Endothelial cell of umbilical vein (primary cell): ENCODE measurements at regions of chr9 and their contacts with region 1.

Region 1: DNA sequence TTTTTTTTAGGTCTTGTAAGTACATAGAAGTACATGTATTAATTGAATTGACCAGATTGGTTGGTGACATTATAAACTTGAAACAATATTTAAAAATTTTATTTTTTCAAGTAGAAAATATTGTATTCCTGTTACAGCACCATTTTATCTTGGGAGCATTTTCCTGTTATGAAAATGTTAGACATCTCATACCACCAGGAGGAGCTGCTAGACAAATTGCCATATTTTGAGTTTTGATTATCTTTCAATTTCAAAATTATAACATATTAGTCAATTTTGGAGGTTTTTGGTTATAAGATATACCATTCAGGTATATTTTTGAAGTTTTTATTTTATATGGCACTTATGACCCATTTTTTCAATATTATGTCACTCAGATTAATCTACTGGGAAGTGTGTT is 84.4 kb downstream of the CNTLN start:
- DNase-seq: peak; percentile 16
- H3K4me3 ChIP-seq: no peak overlapping the region
- H3K27ac ChIP-seq: no peak overlapping the region
- H3K4me1 ChIP-seq: no peaks in the 10 kb centered on the region
- H3K27me3 ChIP-seq: no peaks in the 10 kb centered on the region
- CTCF ChIP-seq: peak in 1 of 2 donors; percentile 18
- POLR2A ChIP-seq: no peak

Region 2: GRCh38 chr9:17402309-17402708 is 183.0 kb after region 1 on chr9:
- CTCF ChIA-PET with region 1: interaction called, 14 read pairs
- POLR2A ChIA-PET with region 1: no interaction called
- dilution Hi-C with region 1: no loop called
- intact Hi-C with region 1: loop called (anchors 2 kb)
- DNase-seq: peak; percentile 29
- H3K4me3 ChIP-seq: no peak overlapping the region
- H3K27ac ChIP-seq: no peak overlapping the region
- H3K4me1 ChIP-seq: peaks cover 8% of the 10 kb centered on the region
- H3K27me3 ChIP-seq: no peaks in the 10 kb centered on the region
- CTCF ChIP-seq: no peak
- POLR2A ChIP-seq: no peak

Region 3: GRCh38 chr9:17462869-17463464 is 243.7 kb after region 1 on chr9:
- CTCF ChIA-PET with region 1: interaction called, 74 read pairs
- POLR2A ChIA-PET with region 1: no interaction called
- dilution Hi-C with region 1: no loop called
- intact Hi-C with region 1: loop called (anchors 1 kb)
- DNase-seq: peak; percentile 68
- H3K4me3 ChIP-seq: no peak overlapping the region
- H3K27ac ChIP-seq: no peak overlapping the region
- H3K4me1 ChIP-seq: no peaks in the 10 kb centered on the region
- H3K27me3 ChIP-seq: no peaks in the 10 kb centered on the region
- CTCF ChIP-seq: peak; percentile 43 to 54
- POLR2A ChIP-seq: no peak